Activated CD4-positive, alpha-beta T cell treated with anti-CD3 and anti-CD28 coated beads, Interleukin-2, amount 10 ng/mL, durations not matched to agents 24 days and 14 days (primary cell): ENCODE measurements at regions of chr11 and their contacts with region 1.

Region 1: GRCh38 chr11:108727665-108728064 is 62.8 kb downstream of the DDX10 start:
- DNase-seq: no peak
- H3K4me3 Mint-ChIP-seq: no peak overlapping the region
- H3K27ac Mint-ChIP-seq: peak overlapping the region; percentile 14
- H3K4me1 Mint-ChIP-seq: peaks cover 29% of the 10 kb centered on the region
- H3K27me3 Mint-ChIP-seq: no peaks in the 10 kb centered on the region

Region 2: GRCh38 chr11:108497317-108498045 is 230.2 kb before region 1 on chr11:
- intact Hi-C with region 1: no loop called
- DNase-seq: peak; percentile 91
- H3K4me3 Mint-ChIP-seq: peak overlapping the region; percentile 89
- H3K27ac Mint-ChIP-seq: peak overlapping the region; percentile 97
- H3K4me1 Mint-ChIP-seq: peaks cover 22% of the 10 kb centered on the region
- H3K27me3 Mint-ChIP-seq: no peaks in the 10 kb centered on the region

Region 3: DNA sequence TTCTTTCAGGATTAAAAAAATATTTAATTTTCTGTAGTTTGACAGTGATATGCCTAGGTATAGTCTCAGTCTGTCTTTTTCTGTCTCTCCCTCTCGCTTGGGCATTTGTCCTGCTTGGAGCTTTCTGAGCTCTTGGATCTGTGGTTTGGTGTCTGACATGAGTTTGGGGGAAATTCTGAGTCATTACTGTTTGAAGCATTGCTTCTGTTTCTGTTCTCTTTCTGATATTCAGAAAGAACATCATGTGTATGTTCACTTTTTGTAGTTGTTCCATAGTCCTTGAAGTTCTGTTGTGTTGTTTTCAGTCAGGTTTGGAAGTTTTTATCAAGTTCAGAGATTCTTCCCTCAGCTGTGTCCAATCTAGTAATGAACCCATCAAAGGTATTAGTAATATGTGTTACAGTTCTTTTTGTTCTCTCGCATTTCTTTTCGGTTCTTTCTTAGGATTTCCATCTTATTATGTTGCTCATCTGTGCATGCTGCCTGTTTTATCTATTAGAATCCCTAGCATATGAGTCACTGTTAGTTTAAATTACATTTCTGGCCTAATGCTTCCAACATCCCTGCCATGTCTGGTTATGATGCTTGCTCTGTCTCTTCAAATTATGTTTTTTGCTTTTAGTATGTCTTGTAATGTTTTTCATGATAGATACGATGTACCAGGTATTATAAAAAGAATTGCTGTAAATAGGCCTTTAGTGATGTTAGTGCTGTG is 14.4 kb before region 1 on chr11:
- intact Hi-C with region 1: loop called (anchors 1 kb)
- DNase-seq: no peak
- H3K4me3 Mint-ChIP-seq: no peak overlapping the region
- H3K27ac Mint-ChIP-seq: peak overlapping the region; percentile 35
- H3K4me1 Mint-ChIP-seq: peaks cover 16% of the 10 kb centered on the region
- H3K27me3 Mint-ChIP-seq: no peaks in the 10 kb centered on the region